Endothelial cell of umbilical vein (primary cell): ENCODE measurements at regions of chr5 and their contacts with region 1.

Region 1: DNA sequence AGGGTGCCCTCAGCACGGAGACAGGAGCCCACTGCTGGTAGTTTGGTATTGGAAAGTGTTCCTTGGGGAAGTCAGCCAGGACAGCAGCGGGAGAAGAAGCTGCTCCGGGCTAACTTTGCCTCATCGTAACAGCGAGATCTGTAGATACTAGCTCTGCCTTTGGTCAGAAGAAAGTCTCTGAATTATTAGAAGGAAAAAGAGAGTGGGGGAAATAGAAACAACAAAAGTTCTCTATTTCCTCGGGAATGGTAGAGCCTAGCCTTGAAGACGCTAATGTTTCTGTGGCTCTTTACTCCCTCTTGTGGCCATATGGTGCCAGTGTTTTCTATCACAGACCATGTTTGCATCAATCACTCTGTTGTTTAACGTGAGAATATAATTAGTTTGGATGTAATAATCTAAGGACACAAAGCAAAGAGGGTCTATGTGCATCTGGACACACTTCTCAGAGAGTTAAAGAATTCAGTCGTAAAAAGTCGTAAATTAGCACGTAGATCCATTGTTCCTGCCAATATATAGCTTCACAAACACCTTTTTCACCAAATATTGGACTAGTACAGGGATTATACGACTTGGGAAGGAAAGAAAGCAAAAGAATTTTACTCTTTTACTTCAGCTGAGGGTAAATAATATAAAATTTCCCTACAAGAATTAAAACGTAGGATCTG is 40.2 kb upstream of the HSD17B4 start:
- DNase-seq: peak; percentile 87
- H3K4me3 ChIP-seq: peak overlapping the region; percentile 22 to 90 (median 79)
- H3K27ac ChIP-seq: peak overlapping the region; percentile 47
- H3K4me1 ChIP-seq: peaks cover 4% of the 10 kb centered on the region
- H3K27me3 ChIP-seq: peaks cover 5 to 12% of the 10 kb centered on the region in 2 experiments
- CTCF ChIP-seq: peak; percentile 70 to 78
- POLR2A ChIP-seq: no peak

Region 2: GRCh38 chr5:119016125-119016774 is 395.8 kb before region 1 on chr5:
- CTCF ChIA-PET with region 1: interaction called, 153 read pairs
- POLR2A ChIA-PET with region 1: no interaction called
- dilution Hi-C with region 1: no loop called
- intact Hi-C with region 1: no loop called
- DNase-seq: no peak
- H3K4me3 ChIP-seq: no peak overlapping the region
- H3K27ac ChIP-seq: no peak overlapping the region
- H3K4me1 ChIP-seq: no peaks in the 10 kb centered on the region
- H3K27me3 ChIP-seq: no peaks in the 10 kb centered on the region
- CTCF ChIP-seq: no peak
- POLR2A ChIP-seq: no peak

Region 3: DNA sequence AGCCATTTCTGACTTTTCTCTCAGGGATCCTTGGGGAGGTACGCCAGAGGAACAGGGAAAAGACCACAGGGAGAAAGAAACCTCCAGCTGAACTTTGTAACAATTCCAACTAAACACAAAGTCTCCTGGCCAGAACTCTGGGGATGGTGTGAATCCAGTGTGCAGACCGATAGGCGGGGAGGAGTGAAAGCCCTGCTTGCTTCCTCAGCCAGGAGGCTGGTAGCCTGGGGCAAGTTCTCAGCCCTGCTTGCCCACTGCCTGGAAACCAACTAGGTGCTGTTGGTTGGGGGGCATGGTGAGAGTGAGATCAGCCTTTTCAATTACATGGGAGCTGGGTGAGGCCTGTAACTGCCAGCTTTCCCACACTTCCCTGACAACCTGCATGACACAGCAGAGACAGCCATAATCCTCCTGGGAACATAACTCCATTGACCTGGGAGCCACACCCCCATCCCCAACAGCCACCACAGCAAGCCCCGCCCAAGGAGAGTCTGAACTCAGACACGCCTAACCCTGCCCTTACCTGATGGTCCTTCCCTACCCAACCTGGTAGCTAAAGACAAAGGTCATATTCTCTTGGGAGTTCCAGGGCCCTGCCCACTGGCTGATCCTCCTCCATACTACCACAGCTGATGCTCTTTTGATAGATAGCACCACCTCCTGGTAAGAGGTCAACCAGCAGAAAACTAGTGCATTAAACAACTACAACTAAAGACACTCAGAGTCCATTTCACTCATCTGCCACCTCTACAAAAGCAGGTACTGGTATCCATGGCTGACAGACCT is 156.3 kb before region 1 on chr5:
- CTCF ChIA-PET with region 1: interaction called, 25 read pairs
- POLR2A ChIA-PET with region 1: no interaction called
- dilution Hi-C with region 1: no loop called
- intact Hi-C with region 1: loop called (anchors 1 kb)
- DNase-seq: peak; percentile 28
- H3K4me3 ChIP-seq: no peak overlapping the region
- H3K27ac ChIP-seq: no peak overlapping the region
- H3K4me1 ChIP-seq: no peaks in the 10 kb centered on the region
- H3K27me3 ChIP-seq: no peaks in the 10 kb centered on the region
- CTCF ChIP-seq: peak; percentile 45 to 52
- POLR2A ChIP-seq: no peak

Region 4: GRCh38 chr5:119302916-119303897 is 108.9 kb before region 1 on chr5:
- CTCF ChIA-PET with region 1: interaction called, 10 read pairs
- POLR2A ChIA-PET with region 1: no interaction called
- dilution Hi-C with region 1: no loop called
- intact Hi-C with region 1: no loop called
- DNase-seq: peak; percentile 93
- H3K4me3 ChIP-seq: no peak overlapping the region
- H3K27ac ChIP-seq: peak overlapping the region; percentile 79
- H3K4me1 ChIP-seq: peaks cover 35% of the 10 kb centered on the region
- H3K27me3 ChIP-seq: no peaks in the 10 kb centered on the region
- CTCF ChIP-seq: no peak
- POLR2A ChIP-seq: no peak

Region 5: GRCh38 chr5:119355685-119356611 is 56.1 kb before region 1 on chr5 and contains the start of gene TNFAIP8:
- CTCF ChIA-PET with region 1: interaction called, 22 read pairs
- POLR2A ChIA-PET with region 1: no interaction called
- dilution Hi-C with region 1: no loop called
- intact Hi-C with region 1: no loop called
- DNase-seq: peak; percentile 59
- H3K4me3 ChIP-seq: peak within 1 kb of the TSS; percentile 37 to 80 (median 60)
- H3K27ac ChIP-seq: no peak within 1 kb of the TSS
- H3K4me1 ChIP-seq: peaks cover 11% of the 10 kb centered on the region
- H3K27me3 ChIP-seq: peaks cover 0 to 1% of the 10 kb centered on the region in 2 experiments
- CTCF ChIP-seq: no peak
- POLR2A ChIP-seq: no peak
- total RNA-seq, gene TNFAIP8: 6.0 and 7.4 TPM in 2 replicates

Region 6: GRCh38 chr5:119435436-119436132 is 23.5 kb after region 1 on chr5:
- CTCF ChIA-PET with region 1: interaction called, 27 read pairs
- POLR2A ChIA-PET with region 1: no interaction called
- dilution Hi-C with region 1: no loop called
- intact Hi-C with region 1: loop called (anchors 1 kb)
- DNase-seq: peak; percentile 62
- H3K4me3 ChIP-seq: no peak overlapping the region
- H3K27ac ChIP-seq: no peak overlapping the region
- H3K4me1 ChIP-seq: no peaks in the 10 kb centered on the region
- H3K27me3 ChIP-seq: peaks cover 4% of the 10 kb centered on the region in 2 experiments
- CTCF ChIP-seq: peak; percentile 59 to 80
- POLR2A ChIP-seq: no peak